Left cardiac atrium (tissue), 4 donors: ENCODE measurements at regions of chr12 and their contacts with region 1.

Region 1: DNA sequence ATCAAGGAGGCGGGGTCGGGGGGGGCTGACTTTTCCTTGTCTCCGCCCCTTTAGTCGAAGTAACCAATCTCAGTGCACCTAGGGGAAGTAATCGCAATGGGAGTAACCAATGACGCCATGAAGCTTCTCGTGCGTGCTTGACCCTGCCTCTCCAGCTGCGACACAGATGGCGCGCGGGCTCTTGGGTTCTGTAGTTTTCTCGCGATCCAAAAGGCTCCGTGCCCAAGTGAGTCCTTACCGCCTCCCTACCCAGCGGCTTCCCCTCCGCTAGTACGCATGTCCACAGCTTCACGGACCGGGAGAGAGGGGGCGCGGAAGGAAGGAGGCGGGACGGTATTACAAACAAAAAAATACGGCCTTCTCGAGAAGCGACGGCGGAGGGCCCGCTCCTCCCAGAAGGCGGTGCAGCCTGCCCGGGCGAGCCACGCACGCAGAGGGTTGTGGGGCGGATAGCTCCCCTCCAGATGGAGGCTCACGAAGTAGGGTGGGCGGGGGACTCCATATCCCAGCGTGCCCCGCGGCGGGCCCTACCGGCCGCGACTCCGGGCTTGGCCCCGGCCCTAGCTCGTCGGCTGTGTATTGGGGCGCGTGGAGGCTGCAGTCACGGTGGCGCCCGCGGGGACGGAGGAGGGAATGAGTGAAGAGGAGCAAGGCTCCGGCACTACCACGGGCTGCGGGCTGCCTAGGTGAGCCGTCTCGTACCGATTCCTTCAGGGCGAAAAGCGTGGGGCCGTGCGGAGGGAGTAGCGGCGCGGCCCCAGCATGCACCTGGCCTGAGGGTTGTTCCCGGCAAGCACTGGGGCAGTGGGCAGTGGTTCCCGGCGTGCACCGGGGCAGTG is at the start of gene TARBP2:
- DNase-seq: peak; percentile 98
- ATAC-seq: peak; percentile 84 to 88
- total RNA-seq, gene TARBP2: 12.5 to 15.3 TPM

Region 2: DNA sequence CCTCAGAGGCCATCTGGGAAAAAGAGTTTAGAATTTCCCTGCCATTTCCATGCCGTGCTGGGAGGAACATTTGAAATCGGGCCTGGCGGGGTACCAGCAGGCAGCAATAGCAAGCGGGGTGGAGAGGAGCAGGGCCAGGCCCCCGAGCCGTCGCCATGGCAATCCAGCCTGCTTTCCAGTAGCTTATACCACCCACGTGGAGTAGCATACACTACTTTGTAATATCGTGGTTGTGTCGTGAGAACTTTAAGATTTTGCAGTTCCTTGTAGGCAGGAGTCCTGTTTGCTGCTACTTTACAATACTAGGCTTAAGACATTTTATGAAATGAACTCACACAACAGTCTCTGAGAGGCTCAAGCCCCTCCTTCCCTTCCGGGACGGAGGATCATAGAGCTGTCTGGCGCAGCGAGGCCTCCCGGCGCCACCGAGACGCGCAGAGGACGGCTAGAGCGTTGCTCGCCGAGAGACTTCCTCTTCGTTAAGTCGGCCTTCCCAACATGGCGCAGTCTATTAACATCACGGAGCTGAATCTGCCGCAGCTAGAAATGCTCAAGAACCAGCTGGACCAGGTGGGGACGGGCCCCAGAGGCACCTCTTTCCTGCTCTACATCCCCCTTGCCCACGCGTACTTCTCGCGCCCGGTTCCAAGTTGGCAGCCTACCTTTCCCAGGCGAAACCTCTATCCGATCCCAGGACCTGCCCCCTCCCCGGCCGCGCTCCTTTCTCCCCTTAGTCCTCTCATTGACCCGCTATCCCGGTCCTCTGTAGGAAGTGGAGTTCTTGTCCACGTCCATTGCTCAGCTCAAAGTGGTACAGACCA is 205.7 kb before region 1 on chr12 and contains the start of gene PFDN5:
- intact Hi-C with region 1: no loop called
- DNase-seq: peak; percentile 93
- ATAC-seq: peak; percentile 91 to 93
- total RNA-seq, gene PFDN5: 345 to 377 TPM

Region 3: DNA sequence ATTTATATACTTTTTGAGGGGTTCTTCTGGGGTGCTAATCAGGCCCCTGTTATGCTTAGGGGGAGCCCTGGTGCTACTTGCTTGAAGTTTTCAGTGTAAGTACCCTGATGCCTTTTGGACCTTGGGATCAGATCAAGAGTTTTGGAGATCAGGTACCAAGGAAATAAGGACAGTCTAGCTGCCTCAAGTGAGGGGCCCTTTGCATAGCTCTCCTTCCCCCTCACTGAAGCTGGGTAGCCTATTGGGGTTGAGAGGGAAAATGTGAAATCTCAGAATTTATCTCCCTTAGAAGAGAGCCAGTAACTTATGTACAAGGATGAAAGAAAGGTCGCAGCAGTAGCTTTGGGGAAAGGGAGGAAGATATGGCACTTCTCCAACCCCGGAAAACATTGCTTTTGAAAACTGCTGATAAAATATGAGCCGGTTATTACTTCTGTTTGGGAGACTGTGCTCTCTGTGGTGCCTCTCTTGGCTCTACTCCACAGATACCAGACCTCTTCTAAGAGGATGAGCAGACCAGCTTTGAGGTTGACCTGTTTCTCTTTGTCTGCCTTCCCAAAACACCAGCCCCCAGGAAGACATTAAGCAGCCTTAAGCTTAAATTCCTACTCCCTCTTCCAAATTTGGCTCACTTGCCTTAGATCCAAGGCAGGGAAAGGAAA is 86.1 kb before region 1 on chr12:
- intact Hi-C with region 1: no loop called
- DNase-seq: no peak
- ATAC-seq: peak; percentile 27 to 62

Region 4: DNA sequence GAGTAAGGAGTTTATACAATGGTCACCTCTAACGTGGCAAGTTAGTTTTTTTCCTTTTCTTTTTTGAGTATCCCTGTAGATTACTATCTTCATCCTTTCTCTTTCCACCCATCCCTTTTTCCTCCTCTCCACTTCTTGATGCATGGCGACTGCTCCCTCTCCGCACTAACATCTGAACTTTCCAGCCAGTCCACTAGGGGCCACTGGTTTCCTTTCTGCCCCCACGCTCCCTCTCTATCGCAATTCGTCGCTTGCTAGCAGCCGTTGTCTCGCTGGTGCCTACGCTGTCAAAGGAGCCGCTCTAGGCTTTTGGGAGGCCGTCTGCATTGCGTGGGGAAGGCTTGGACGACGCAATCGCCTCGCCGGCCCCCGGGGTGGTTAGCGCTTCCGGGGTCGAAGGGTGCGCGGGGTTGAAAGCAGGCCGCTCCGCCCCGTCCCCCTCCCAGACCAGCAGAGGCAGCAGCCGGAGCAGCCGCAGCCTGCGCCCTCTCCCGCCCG is 49.3 kb before region 1 on chr12 and contains the start of gene PCBP2:
- intact Hi-C with region 1: loop called in 1 of 2 experiments (anchors 5 kb)
- DNase-seq: peak; percentile 98
- ATAC-seq: peak; percentile 97 to 98
- total RNA-seq, gene PCBP2: 504 to 545 TPM